ENCODE measurements at regions of chr16 and their contacts with region 1.

Region 1: DNA sequence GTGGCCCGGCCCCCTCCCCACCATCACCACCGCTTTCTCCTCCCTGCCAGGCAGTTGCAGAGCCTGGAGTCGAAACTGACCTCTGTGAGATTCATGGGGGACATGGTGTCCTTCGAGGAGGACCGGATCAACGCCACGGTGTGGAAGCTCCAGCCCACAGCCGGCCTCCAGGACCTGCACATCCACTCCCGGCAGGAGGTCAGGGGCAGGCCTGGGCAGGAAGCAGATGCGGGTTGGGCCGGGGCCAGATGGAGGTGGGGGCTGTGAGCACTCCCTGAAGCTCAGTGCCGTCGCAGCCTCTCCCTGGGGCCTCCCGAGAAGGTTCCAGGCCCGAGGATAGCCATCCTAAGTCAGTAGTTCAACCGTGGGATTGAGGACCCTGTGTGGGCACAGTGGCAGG is 14.2 kb upstream of the ADGRG3 start:
- DNase-seq: no peak
- ATAC-seq: peak in 6 of 8 donors; percentile 21 to 71 (median 51)
- H3K4me3 ChIP-seq: no peak overlapping the region
- H3K27ac ChIP-seq: peak overlapping the region in 1 of 10 donors; percentile 54
- H3K4me1 ChIP-seq: peaks cover 0 to 14% (median under 1%) of the 10 kb centered on the region in 9 donors
- H3K27me3 ChIP-seq: peaks cover 0 to 4% (median 0%) of the 10 kb centered on the region in 7 donors
- CTCF ChIP-seq: no peak

Region 2: GRCh38 chr16:57409870-57410585 is 243.9 kb before region 1 on chr16:
- intact Hi-C with region 1: no loop called
- DNase-seq: no peak
- ATAC-seq: peak in 3 of 8 donors; percentile 20 to 62 (median 33)
- H3K4me3 ChIP-seq: no peak overlapping the region
- H3K27ac ChIP-seq: peak overlapping the region in 9 of 10 donors; percentile 8 to 75 (median 63)
- H3K4me1 ChIP-seq: peaks cover 6 to 28% (median 22%) of the 10 kb centered on the region in 9 donors
- H3K27me3 ChIP-seq: no peaks in the 10 kb centered on the region
- CTCF ChIP-seq: no peak

Region 3: GRCh38 chr16:57711346-57712026 is 57.5 kb after region 1 on chr16:
- intact Hi-C with region 1: loop called in 1 of 10 experiments (anchors 10 kb)
- DNase-seq: no peak
- ATAC-seq: no peak
- H3K4me3 ChIP-seq: no peak overlapping the region
- H3K27ac ChIP-seq: no peak overlapping the region
- H3K4me1 ChIP-seq: no peaks in the 10 kb centered on the region
- H3K27me3 ChIP-seq: peaks cover 0 to 11% (median 0%) of the 10 kb centered on the region in 7 donors
- CTCF ChIP-seq: no peak

Measured in heart right ventricle (tissue), 16 donors.